Dendritic cell treated with granulocyte-macrophage colony-stimulating factor and Interleukin-4, amounts not matched to agents 40 ng/mL and 50 ng/mL, for 4 days (primary cell): ENCODE measurements at regions of chr7 and their contacts with region 1.

Region 1: GRCh38 chr7:14457568-14458453 is 444.7 kb downstream of the DGKB start:
- H3K4me3 Mint-ChIP-seq: no peak overlapping the region
- H3K27ac Mint-ChIP-seq: no peak overlapping the region
- H3K4me1 Mint-ChIP-seq: no peaks in the 10 kb centered on the region
- H3K27me3 Mint-ChIP-seq: no peaks in the 10 kb centered on the region

Region 2: GRCh38 chr7:14691597-14692203 is 233.9 kb after region 1 on chr7:
- intact Hi-C with region 1: loop called (anchors 10 kb)
- H3K4me3 Mint-ChIP-seq: no peak overlapping the region
- H3K27ac Mint-ChIP-seq: no peak overlapping the region
- H3K4me1 Mint-ChIP-seq: peaks cover 8% of the 10 kb centered on the region
- H3K27me3 Mint-ChIP-seq: no peaks in the 10 kb centered on the region